IMR-90 (cell line): ENCODE measurements at regions of chr7 and their contacts with region 1.

Region 1: DNA sequence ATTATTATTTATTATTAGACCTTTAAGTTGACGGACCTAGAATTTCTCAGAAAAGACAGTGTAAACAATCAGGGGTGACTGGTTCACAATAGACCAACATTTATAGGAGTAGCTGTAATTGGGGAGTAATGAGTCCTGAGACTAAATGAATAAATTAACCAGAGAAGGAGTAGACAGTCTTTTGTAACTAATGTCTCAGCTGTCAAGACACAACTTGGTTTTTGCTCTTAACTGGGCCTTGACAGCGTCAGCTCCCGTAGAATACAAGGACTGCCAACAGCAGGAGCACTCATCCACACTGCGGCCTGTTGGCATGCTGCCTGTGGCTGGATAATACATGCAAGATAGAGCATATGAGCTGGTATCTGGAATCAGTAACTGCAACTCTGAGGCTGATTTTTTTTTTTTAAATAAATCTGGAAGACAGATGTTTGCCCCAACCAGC is 123.9 kb downstream of the CACNA2D1 start:
- DNase-seq: peak; percentile 88
- ATAC-seq: peak; percentile 86
- H3K4me3 ChIP-seq: no peak overlapping the region
- H3K27ac ChIP-seq: no peak overlapping the region
- H3K4me1 ChIP-seq: peaks cover 3% of the 10 kb centered on the region; the same call in 1 of the 2 replicates
- H3K27me3 ChIP-seq: no peaks in the 10 kb centered on the region
- CTCF ChIP-seq: no peak
- POLR2A ChIP-seq: no peak
- RAD21 ChIP-seq: no peak

Region 2: GRCh38 chr7:82234457-82235049 is 85.1 kb before region 1 on chr7:
- CTCF ChIA-PET with region 1: no interaction called
- POLR2A ChIA-PET with region 1: no interaction called
- dilution Hi-C with region 1: no loop called
- in situ Hi-C with region 1: no loop called
- intact Hi-C with region 1: no loop called
- DNase-seq: peak; percentile 59
- ATAC-seq: no peak; the same call in 1 of the 2 replicates
- H3K4me3 ChIP-seq: no peak overlapping the region
- H3K27ac ChIP-seq: no peak overlapping the region
- H3K4me1 ChIP-seq: 0 out of 2 replicates have a peak, but pooled peaks cover 1% of the 10 kb centered on the region
- H3K27me3 ChIP-seq: no peaks in the 10 kb centered on the region
- CTCF ChIP-seq: peak; percentile 75
- POLR2A ChIP-seq: no peak
- RAD21 ChIP-seq: peak; percentile 75

Region 3: GRCh38 chr7:82335927-82336326 is 16.2 kb after region 1 on chr7:
- CTCF ChIA-PET with region 1: no interaction called
- POLR2A ChIA-PET with region 1: no interaction called
- dilution Hi-C with region 1: no loop called
- in situ Hi-C with region 1: no loop called
- intact Hi-C with region 1: loop called (anchors 1 kb)
- DNase-seq: peak; percentile 66
- ATAC-seq: no peak; the same call in 1 of the 2 replicates
- H3K4me3 ChIP-seq: no peak overlapping the region
- H3K27ac ChIP-seq: no peak overlapping the region
- H3K4me1 ChIP-seq: peaks cover 2% of the 10 kb centered on the region; the same call in 1 of the 2 replicates
- H3K27me3 ChIP-seq: no peaks in the 10 kb centered on the region
- CTCF ChIP-seq: no peak
- POLR2A ChIP-seq: no peak
- RAD21 ChIP-seq: no peak